ENCODE measurements at regions of chr22 and their contacts with region 1.

Region 1: GRCh38 chr22:32265882-32266767 is 11.0 kb upstream of the SLC5A4 start:
- DNase-seq: peak; percentile 81
- H3K4me3 ChIP-seq: no peak overlapping the region
- H3K27ac ChIP-seq: no peak overlapping the region
- H3K4me1 ChIP-seq: peaks cover 5% of the 10 kb centered on the region
- H3K27me3 ChIP-seq: no peaks in the 10 kb centered on the region
- CTCF ChIP-seq: peak; percentile 85 to 90
- POLR2A ChIP-seq: no peak

Region 2: DNA sequence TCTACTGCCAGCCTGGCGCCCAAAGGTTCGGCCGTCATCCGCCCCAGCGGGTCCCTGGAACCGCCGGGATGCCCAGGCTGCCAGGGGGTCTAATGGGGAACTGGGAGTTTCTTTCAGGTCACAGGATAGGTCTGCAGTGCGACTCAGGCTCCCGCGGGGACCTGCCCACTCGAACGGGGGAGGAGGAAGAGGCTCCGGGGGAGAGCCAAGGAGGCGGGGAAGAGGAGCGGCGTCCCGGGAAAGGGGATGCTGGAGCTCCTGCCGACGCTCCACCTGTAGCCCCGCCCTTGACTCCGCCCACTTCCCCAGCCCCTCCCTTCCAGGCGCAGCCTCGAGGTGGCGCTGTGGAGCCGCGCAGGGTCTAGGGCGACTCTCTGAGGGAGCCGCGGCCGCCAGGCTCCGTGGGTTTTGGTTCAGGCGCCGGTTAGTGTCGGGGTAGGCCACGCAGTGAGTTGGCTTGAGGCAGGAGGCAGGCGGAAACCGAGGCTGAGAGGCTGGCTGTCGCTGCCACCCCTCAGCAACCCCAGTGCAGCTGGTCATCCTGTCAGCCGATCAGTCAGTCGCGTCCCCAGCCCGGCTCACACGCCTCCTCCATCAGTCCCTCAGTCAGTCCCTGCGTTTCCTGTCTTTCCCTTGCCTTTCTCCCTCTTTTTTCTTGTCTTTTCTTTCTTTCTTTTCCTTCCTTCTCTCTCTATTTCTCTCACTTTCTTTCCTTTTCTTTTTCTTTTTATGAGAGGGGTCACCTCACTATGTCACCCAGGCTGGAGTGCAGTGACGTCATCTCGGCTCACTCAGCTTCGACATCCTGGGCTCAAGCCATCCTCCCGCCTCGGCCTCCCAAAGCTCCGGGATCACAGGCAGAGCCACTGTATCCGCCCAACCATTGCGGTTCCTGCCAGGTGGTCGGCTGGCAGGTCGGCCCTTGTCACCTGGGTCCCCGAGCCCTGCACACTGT is 295.4 kb before region 1 on chr22:
- CTCF ChIA-PET with region 1: interaction called, 63 read pairs
- POLR2A ChIA-PET with region 1: no interaction called
- dilution Hi-C with region 1: no loop called
- intact Hi-C with region 1: no loop called
- DNase-seq: peak; percentile 80
- H3K4me3 ChIP-seq: peak overlapping the region in 2 of 3 experiments; percentile 9 to 31
- H3K27ac ChIP-seq: no peak overlapping the region
- H3K4me1 ChIP-seq: peaks cover 6% of the 10 kb centered on the region
- H3K27me3 ChIP-seq: no peaks in the 10 kb centered on the region
- CTCF ChIP-seq: peak; percentile 93 to 98
- POLR2A ChIP-seq: no peak

Region 3: GRCh38 chr22:31983911-31984656 is 282.0 kb before region 1 on chr22:
- CTCF ChIA-PET with region 1: interaction called, 63 read pairs
- POLR2A ChIA-PET with region 1: no interaction called
- dilution Hi-C with region 1: no loop called
- intact Hi-C with region 1: no loop called
- DNase-seq: no peak
- H3K4me3 ChIP-seq: no peak overlapping the region
- H3K27ac ChIP-seq: no peak overlapping the region
- H3K4me1 ChIP-seq: no peaks in the 10 kb centered on the region
- H3K27me3 ChIP-seq: no peaks in the 10 kb centered on the region
- CTCF ChIP-seq: no peak
- POLR2A ChIP-seq: no peak

Region 4: GRCh38 chr22:32144496-32145274 is 121.4 kb before region 1 on chr22:
- CTCF ChIA-PET with region 1: interaction called, 3 read pairs
- POLR2A ChIA-PET with region 1: no interaction called
- dilution Hi-C with region 1: no loop called
- intact Hi-C with region 1: loop called (anchors 2 kb)
- DNase-seq: no peak
- H3K4me3 ChIP-seq: no peak overlapping the region
- H3K27ac ChIP-seq: no peak overlapping the region
- H3K4me1 ChIP-seq: no peaks in the 10 kb centered on the region
- H3K27me3 ChIP-seq: no peaks in the 10 kb centered on the region
- CTCF ChIP-seq: no peak
- POLR2A ChIP-seq: no peak

Region 5: GRCh38 chr22:32233091-32233490 is 33.0 kb before region 1 on chr22:
- CTCF ChIA-PET with region 1: interaction called, 11 read pairs
- POLR2A ChIA-PET with region 1: no interaction called
- dilution Hi-C with region 1: no loop called
- intact Hi-C with region 1: no loop called
- DNase-seq: no peak
- H3K4me3 ChIP-seq: no peak overlapping the region
- H3K27ac ChIP-seq: no peak overlapping the region
- H3K4me1 ChIP-seq: no peaks in the 10 kb centered on the region
- H3K27me3 ChIP-seq: no peaks in the 10 kb centered on the region
- CTCF ChIP-seq: no peak
- POLR2A ChIP-seq: no peak

Region 6: DNA sequence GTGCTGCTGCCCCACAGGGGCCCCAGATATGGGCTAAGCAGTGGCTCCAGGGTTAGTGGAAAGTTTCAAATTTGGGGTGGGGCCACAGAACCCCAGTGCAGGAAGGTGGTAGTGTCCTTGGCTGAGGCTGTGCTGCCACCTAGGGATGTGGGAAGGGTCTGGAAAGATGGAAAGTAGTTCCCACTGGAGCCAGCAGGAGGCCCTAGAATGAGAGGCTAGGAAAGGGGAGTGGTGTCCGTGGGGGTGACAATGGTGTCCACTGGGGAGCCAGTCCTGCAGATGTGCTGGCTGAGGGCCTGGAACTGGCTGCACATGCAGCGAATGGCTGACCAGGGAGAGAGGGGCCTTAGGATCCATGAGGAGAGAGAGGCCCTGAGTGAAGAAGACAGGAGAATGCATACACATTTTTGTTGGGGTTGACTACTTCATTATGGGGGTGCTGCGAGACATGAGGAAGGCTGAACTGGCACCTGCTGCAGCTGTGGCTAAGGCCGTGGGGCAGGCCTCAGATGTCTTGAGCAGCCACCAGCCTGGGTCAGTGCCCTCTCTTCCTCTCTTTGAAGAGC is 112.7 kb after region 1 on chr22:
- CTCF ChIA-PET with region 1: interaction called, 10 read pairs
- POLR2A ChIA-PET with region 1: no interaction called
- dilution Hi-C with region 1: no loop called
- intact Hi-C with region 1: loop called (anchors 2 kb)
- DNase-seq: peak; percentile 62
- H3K4me3 ChIP-seq: no peak overlapping the region
- H3K27ac ChIP-seq: no peak overlapping the region
- H3K4me1 ChIP-seq: no peaks in the 10 kb centered on the region
- H3K27me3 ChIP-seq: peaks cover 0 to 2% of the 10 kb centered on the region in 2 experiments
- CTCF ChIP-seq: peak; percentile 92 to 97
- POLR2A ChIP-seq: no peak

Measured in endothelial cell of umbilical vein (primary cell).